HepG2 (cell line): ENCODE measurements at regions of chr14 and their contacts with region 1.

Region 1: DNA sequence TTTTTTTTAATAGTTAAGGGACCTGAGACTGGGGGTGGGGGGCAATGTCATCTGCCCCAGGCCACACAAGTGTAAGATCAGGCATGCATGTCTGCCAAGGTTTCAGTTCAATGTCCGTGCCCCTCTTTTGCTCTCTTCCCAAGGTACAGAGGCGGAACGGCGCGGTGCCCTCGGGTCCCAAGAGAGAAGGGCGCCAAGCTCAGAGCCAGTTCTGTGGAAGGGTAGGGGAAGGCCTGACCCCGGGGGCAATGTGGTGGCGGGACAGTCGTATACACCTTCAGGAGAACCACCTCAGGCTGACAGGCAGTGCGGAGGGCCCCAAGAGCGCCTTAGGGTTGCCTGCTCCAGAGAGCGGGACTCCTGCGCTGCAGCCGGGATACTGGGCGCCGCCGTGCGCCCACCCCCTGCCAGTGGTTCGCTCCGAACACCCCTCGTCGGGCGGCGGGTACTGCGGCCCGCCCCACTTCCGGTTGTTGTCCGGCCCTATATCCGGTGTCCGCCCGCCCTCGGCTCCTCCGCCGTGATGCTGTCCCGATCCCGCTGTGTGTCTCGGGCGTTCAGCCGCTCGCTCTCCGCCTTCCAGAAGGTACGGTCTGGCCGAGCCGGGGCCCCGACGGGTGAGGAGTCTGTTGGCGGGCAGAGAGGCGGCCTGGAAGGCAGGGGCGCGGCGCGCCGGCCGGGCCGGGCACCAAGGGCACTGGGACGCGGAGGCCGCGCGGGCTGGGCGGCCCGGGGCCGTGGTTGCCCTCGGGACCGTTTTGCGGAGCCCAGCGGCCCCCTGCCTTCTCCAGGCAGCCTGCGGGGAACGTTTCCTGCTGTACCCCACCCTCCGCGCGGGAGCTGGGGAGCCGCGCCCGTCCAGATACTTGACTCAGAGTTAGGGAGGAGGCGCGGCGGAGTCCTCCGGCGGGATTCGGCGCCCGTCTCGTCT is at the start of gene DLST:
- DNase-seq: peak; percentile 67
- ATAC-seq: peak; percentile 96
- H3K4me3 ChIP-seq: peak within 1 kb of the TSS; percentile 91 to 93 (median 93)
- H3K27ac ChIP-seq: peak within 1 kb of the TSS; percentile 71
- H3K4me1 ChIP-seq: peaks cover 69% of the 10 kb centered on the region
- H3K27me3 ChIP-seq: no peaks in the 10 kb centered on the region; a peak in 1 of 5 replicates
- CTCF ChIP-seq: peak; percentile 15; the same call in 1 of the 2 replicates
- EP300 ChIP-seq: 0 out of 4 replicates have a peak, but pooled peaks of 1 of the 2 experiments have one; percentile 15
- POLR2A ChIP-seq: peak; percentile 71 to 91
- RAD21 ChIP-seq: 0 out of 2 replicates have a peak, but pooled peaks have one; percentile 27
- total RNA-seq, gene DLST: 56.5 and 69.9 TPM in 2 replicates

Region 2: GRCh38 chr14:74860906-74861733 is 20.6 kb before region 1 on chr14:
- CTCF ChIA-PET with region 1: interaction called, 5 read pairs
- POLR2A ChIA-PET with region 1: interaction called, 12 read pairs
- in situ Hi-C with region 1: no loop called
- intact Hi-C with region 1: no loop called
- DNase-seq: peak; percentile 77
- ATAC-seq: peak; percentile 89
- H3K4me3 ChIP-seq: no peak overlapping the region
- H3K27ac ChIP-seq: no peak overlapping the region
- H3K4me1 ChIP-seq: peaks cover 2% of the 10 kb centered on the region
- H3K27me3 ChIP-seq: 0 out of 5 replicates have a peak, but pooled peaks cover 0 to 2% of the 10 kb centered on the region in 2 experiments
- CTCF ChIP-seq: peak; percentile 92
- EP300 ChIP-seq: no peak
- POLR2A ChIP-seq: no peak
- RAD21 ChIP-seq: peak; percentile 70

Region 3: DNA sequence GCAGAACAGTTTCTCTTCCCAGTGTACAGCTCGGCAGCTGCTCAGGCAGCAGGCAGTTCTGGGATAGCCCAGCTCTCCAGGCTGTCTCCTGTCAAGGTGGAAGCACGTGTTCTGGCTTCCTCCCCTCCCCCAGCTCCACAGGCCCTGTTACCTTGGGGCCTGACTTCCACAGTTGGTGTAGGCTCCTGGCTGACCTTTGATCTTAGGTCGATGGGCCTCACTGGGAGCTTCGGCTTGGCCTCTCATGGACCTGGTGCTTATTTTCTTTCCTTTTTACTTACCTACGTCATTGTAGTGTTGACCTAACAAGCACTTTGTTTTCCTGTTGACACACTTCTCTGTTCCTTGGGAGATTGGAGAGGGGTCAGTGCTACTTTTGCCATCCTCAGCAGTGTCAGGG is 17.0 kb after region 1 on chr14:
- CTCF ChIA-PET with region 1: no interaction called
- POLR2A ChIA-PET with region 1: interaction called, 84 read pairs
- in situ Hi-C with region 1: no loop called
- intact Hi-C with region 1: loop called (anchors 2 kb)
- DNase-seq: peak; percentile 82
- ATAC-seq: peak; percentile 95
- H3K4me3 ChIP-seq: no peak overlapping the region
- H3K27ac ChIP-seq: peak overlapping the region; percentile 73
- H3K4me1 ChIP-seq: peaks cover 46% of the 10 kb centered on the region
- H3K27me3 ChIP-seq: no peaks in the 10 kb centered on the region
- CTCF ChIP-seq: no peak
- EP300 ChIP-seq: peak in 1 of 2 experiments; percentile 81; a peak in 2 of 4 replicates
- POLR2A ChIP-seq: no peak
- RAD21 ChIP-seq: peak; percentile 40; the same call in 1 of the 2 replicates

Region 4: GRCh38 chr14:74905375-74906142 is 23.9 kb after region 1 on chr14:
- CTCF ChIA-PET with region 1: interaction called, 20 read pairs
- POLR2A ChIA-PET with region 1: interaction called, 84 read pairs
- in situ Hi-C with region 1: no loop called
- intact Hi-C with region 1: loop called (anchors 2 kb)
- DNase-seq: peak; percentile 36
- ATAC-seq: peak; percentile 59
- H3K4me3 ChIP-seq: no peak overlapping the region
- H3K27ac ChIP-seq: no peak overlapping the region
- H3K4me1 ChIP-seq: peaks cover 5% of the 10 kb centered on the region; the same call in 1 of the 2 replicates
- H3K27me3 ChIP-seq: no peaks in the 10 kb centered on the region
- CTCF ChIP-seq: peak; percentile 96
- EP300 ChIP-seq: 0 out of 4 replicates have a peak, but pooled peaks of 1 of the 2 experiments have one; percentile 25
- POLR2A ChIP-seq: no peak
- RAD21 ChIP-seq: peak; percentile 80